Aorta (tissue), 5 donors: ENCODE measurements at regions of chr11 and their contacts with region 1.

Region 1: GRCh38 chr11:69010964-69011623 is 2.0 kb downstream of the MRGPRF start:
- DNase-seq: peak; percentile 88 to 94
- ATAC-seq: peak; percentile 67
- H3K4me3 ChIP-seq: peak overlapping the region; percentile 79 to 85
- H3K27ac ChIP-seq: peak overlapping the region; percentile 73 to 76
- H3K4me1 ChIP-seq: no peaks in the 10 kb centered on the region
- H3K27me3 ChIP-seq: no peaks in the 10 kb centered on the region

Region 2: DNA sequence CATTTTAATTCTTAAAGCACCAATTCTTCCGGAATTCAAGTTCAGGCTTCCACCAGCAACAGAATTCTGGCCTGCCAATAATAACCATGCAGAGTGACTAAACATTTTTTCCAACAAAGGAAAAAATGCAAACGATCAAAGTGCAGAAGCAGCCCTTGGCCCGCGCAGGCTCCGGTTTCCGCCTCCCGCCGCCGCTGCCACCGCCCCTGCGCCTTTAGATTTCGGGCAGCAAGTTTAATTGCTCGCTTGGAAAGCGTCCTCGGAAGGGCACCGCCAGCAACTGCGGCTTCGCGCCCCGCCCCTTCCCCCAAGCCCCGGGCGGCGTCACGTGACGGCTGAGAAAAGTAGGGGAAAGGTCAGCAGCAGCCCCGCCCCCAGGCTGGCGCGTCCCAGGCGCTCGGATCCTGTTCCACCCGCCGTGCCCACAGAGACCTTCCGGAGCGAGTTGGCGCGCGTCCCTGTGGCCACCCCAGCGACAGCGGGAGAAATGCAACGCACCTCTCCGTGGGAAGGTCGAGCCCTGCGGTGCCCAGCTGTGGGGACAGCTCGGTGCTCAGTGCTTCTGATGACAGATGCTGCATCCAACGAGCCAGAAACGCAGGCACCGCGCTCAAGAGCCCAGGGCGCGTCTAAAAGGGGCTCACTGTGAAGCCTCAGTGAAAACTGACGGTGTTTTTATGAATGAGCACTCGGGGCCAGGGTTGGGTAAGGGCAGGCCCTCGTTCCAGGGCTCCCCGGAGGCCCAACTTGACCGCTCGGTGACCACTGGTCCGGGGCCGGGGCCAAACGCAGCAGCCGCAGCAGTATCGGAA is 171.8 kb before region 1 on chr11:
- intact Hi-C with region 1: no loop called
- DNase-seq: peak; percentile 97 to 99
- ATAC-seq: peak; percentile 92
- H3K4me3 ChIP-seq: peak overlapping the region; percentile 10 to 31
- H3K27ac ChIP-seq: peak overlapping the region; percentile 62 to 88
- H3K4me1 ChIP-seq: no peaks in the 10 kb centered on the region
- H3K27me3 ChIP-seq: no peaks in the 10 kb centered on the region

Region 3: GRCh38 chr11:68927280-68928135 is 83.6 kb before region 1 on chr11:
- intact Hi-C with region 1: loop called in 1 of 2 experiments (anchors 5 kb)
- DNase-seq: peak; percentile 57 to 74
- ATAC-seq: peak; percentile 40
- H3K4me3 ChIP-seq: no peak overlapping the region
- H3K27ac ChIP-seq: peak overlapping the region in 1 of 2 donors; percentile 4
- H3K4me1 ChIP-seq: peaks cover 0 to 3% of the 10 kb centered on the region in 2 donors
- H3K27me3 ChIP-seq: no peaks in the 10 kb centered on the region

Region 4: DNA sequence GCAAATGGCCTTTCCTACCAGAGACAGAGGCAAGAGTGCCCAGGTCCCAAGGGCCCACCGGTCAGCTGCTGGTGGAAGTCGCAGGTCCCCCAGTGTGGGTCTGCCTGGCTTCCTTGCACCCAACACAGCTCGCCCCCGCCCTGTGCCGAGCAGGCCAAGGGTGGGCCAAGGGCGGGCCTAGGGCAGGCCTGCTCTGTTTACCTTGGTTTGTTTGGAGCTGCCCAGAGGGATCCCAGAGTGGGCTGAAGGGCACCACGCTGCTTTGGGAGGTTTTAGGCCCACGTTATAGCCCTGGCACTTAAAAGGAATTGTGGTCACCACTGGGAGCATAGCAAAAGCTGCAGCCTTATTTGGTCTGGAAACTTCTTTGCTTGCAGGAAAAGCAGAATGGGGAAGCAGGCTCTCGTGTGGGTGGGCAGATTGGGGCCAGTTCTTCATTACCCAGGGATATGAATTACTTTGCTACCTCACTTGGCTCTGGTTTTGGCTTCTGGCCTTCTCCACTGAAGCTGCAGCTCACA is 68.3 kb before region 1 on chr11:
- intact Hi-C with region 1: loop called (anchors 5 kb)
- DNase-seq: peak; percentile 78 to 84
- ATAC-seq: peak; percentile 87
- H3K4me3 ChIP-seq: no peak overlapping the region
- H3K27ac ChIP-seq: peak overlapping the region; percentile 90 to 98
- H3K4me1 ChIP-seq: no peaks in the 10 kb centered on the region
- H3K27me3 ChIP-seq: no peaks in the 10 kb centered on the region

Region 5: DNA sequence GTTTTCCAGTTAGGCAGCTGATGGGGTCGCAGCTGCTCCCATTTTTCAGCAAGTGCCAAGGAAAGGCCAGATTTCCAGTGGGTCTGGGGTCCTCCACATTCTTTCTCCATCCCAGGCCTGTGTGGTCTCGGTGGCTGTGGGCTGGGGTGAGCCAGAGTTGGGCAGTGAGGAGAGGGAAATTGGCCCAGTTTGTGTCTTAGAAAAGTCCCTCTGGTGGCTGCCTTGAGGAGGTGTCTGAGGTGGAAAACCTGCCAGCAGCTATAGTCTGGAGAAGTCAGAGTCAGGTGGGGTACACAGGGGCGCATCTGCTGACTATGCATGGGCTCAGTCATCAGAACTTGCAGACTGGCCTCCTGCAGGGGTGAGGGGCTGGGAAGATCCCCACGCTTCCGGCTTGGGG is 60.8 kb before region 1 on chr11:
- intact Hi-C with region 1: loop called in 1 of 2 experiments (anchors 5 kb)
- DNase-seq: no peak
- ATAC-seq: no peak
- H3K4me3 ChIP-seq: no peak overlapping the region
- H3K27ac ChIP-seq: no peak overlapping the region
- H3K4me1 ChIP-seq: no peaks in the 10 kb centered on the region
- H3K27me3 ChIP-seq: no peaks in the 10 kb centered on the region

Region 6: DNA sequence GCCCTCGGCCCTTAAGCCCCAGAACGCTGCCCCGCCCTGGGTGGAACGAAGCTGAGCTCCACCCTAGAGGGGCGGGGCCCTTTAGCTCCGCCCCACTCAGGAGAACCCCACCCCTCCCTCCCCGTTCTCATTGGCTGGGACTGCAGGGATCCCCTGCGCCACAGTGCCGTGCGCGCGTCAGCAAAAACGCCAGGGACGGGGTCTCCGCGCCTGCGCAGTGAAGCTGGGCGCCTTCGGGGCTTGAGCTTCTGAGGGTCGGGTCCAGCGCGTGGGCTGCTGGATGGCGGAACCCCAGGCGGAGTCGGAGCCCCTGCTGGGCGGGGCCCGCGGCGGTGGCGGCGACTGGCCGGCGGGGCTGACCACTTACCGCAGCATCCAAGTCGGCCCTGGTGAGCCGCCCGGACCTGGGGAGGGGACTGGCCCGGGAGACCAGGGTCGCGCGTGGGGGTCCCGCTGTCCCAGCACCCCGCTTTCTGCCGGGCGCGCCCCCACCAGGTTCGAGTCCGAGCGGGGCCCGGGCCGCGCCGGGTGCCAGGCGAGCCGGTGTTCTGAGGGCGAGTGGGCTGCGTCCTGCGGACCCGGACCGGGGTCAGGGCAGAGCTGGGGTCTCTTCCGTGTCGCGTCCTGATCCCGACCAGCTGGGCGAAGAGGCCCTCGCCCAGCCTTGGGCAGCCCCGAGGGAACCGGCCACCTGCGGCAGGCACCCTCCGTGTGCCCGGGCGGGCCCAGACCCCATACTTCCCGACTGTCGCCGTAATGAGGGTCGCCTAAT is 37.8 kb after region 1 on chr11 and contains the start of gene TPCN2:
- intact Hi-C with region 1: loop called (anchors 2 to 5 kb)
- DNase-seq: peak; percentile 95 to 97
- ATAC-seq: peak; percentile 96
- H3K4me3 ChIP-seq: peak within 1 kb of the TSS; percentile 43 to 72
- H3K27ac ChIP-seq: peak within 1 kb of the TSS; percentile 43 to 57
- H3K4me1 ChIP-seq: no peaks in the 10 kb centered on the region
- H3K27me3 ChIP-seq: no peaks in the 10 kb centered on the region
- total RNA-seq, gene TPCN2: 25.8 to 27.9 TPM